ENCODE measurements at regions of chr15 and their contacts with region 1.

Region 1: GRCh38 chr15:61195116-61196002 is 33.7 kb downstream of the RORA start:
- DNase-seq: peak in 2 of 35 experiments; percentile 2 to 43
- ATAC-seq: peak in 1 of 4 experiments; percentile 27
- H3K4me3 ChIP-seq: no peak overlapping the region
- H3K4me3 Mint-ChIP-seq: no peak overlapping the region
- H3K27ac ChIP-seq: no peak overlapping the region
- H3K27ac Mint-ChIP-seq: no peak overlapping the region
- H3K4me1 ChIP-seq: no peaks in the 10 kb centered on the region
- H3K4me1 Mint-ChIP-seq: no peaks in the 10 kb centered on the region
- H3K27me3 ChIP-seq: peaks cover 0 to 6% of the 10 kb centered on the region in 2 experiments
- H3K27me3 Mint-ChIP-seq: peaks cover 7 to 10% of the 10 kb centered on the region in 2 donors

Region 2: DNA sequence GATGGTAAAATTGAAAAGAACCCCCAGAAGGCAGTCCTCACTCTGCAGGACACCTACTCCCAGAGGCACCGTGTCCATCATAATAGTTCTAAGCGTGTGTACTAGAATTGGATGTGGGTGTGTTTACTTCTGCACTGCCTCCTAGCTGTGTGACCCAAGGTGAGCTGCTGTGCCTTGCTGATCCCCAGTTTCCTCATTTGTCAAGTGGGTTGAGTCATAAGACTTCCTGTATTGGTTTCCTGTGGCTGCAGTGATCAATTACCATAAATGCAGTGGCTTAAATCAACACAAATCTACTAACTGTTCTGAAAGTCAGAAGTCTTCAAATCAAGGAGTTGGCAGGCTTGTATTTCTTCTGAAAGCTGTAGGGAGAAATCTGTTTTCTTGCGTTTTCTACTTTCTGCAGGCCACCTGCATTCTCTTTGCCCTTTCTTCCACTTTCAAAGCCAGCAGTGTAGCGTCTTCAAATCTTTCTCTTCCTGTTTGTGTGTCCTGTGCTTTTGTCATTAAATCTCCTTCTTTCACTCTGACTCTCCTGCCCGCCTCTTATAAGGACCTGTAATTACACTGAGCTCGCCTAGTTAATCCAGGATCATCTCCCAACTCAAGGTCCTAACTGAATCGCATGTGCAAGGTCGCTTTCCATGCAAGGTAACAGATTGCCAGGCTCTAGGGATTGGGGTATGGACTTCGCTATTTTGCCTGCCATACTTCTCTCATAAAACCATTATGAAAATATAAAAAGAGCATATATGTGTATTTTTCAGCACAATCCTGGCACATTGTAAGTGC is 25.3 kb before region 1 on chr15:
- CTCF ChIA-PET with region 1: no interaction called
- POLR2A ChIA-PET with region 1: no interaction called
- DNase-seq: peak in 1 of 35 experiments; percentile 25
- ATAC-seq: peak in 3 of 4 experiments; percentile 49 to 74 (median 50)
- H3K4me3 ChIP-seq: no peak overlapping the region
- H3K4me3 Mint-ChIP-seq: peak overlapping the region; percentile 22 to 57 (median 28)
- H3K27ac ChIP-seq: peak overlapping the region; percentile 22
- H3K27ac Mint-ChIP-seq: peak overlapping the region; percentile 79 to 80
- H3K4me1 ChIP-seq: peaks cover 3 to 16% of the 10 kb centered on the region in 2 experiments
- H3K4me1 Mint-ChIP-seq: peaks cover 17 to 21% (median 20%) of the 10 kb centered on the region in 3 donors
- H3K27me3 ChIP-seq: peaks cover 0 to 8% of the 10 kb centered on the region in 2 experiments
- H3K27me3 Mint-ChIP-seq: peaks cover 12 to 22% of the 10 kb centered on the region in 2 donors

Region 3: DNA sequence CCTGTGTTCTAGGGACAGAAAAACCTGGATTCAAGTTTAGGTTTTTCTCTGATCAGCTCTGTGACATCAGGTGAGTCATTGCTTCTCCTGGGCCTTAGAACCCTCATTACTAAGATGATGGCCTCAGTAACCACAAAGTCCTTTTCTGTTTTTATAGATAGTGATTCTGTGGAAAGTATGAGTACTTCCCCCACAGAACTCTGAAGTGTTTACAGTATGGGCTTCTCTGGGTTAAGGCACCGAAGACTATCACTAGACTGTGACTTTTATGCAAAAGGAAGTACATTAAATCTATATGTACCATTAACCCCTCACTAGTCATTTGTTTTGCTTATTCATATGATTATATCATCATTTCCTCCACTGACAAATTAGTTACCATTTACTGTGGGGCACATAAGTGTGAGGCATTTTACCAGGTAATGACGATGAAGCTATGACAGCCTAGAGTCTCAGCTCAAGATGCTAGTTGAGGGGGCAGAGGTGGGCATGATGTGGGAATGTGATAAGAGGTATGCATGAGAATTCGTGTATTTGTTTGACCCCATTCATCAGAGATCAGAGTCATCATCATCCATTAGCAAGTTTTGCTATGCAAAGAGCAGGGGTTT is 48.7 kb after region 1 on chr15:
- CTCF ChIA-PET with region 1: no interaction called
- POLR2A ChIA-PET with region 1: interaction called in 1 of 2 experiments, 10 read pairs
- DNase-seq: no peak
- ATAC-seq: no peak
- H3K4me3 ChIP-seq: no peak overlapping the region
- H3K4me3 Mint-ChIP-seq: no peak overlapping the region
- H3K27ac ChIP-seq: no peak overlapping the region
- H3K27ac Mint-ChIP-seq: no peak overlapping the region
- H3K4me1 ChIP-seq: no peaks in the 10 kb centered on the region
- H3K4me1 Mint-ChIP-seq: no peaks in the 10 kb centered on the region
- H3K27me3 ChIP-seq: no peaks in the 10 kb centered on the region
- H3K27me3 Mint-ChIP-seq: peaks cover 19 to 39% of the 10 kb centered on the region in 2 donors

Measured in T-cell (primary cell).